ENCODE measurements at regions of chr5 and their contacts with region 1.

Region 1: GRCh38 chr5:143355720-143356119 is 47.8 kb downstream of the NR3C1 start:
- DNase-seq: no peak
- H3K4me3 Mint-ChIP-seq: no peak overlapping the region
- H3K27ac Mint-ChIP-seq: no peak overlapping the region
- H3K4me1 Mint-ChIP-seq: peaks cover 55% of the 10 kb centered on the region
- H3K27me3 Mint-ChIP-seq: no peaks in the 10 kb centered on the region

Region 2: DNA sequence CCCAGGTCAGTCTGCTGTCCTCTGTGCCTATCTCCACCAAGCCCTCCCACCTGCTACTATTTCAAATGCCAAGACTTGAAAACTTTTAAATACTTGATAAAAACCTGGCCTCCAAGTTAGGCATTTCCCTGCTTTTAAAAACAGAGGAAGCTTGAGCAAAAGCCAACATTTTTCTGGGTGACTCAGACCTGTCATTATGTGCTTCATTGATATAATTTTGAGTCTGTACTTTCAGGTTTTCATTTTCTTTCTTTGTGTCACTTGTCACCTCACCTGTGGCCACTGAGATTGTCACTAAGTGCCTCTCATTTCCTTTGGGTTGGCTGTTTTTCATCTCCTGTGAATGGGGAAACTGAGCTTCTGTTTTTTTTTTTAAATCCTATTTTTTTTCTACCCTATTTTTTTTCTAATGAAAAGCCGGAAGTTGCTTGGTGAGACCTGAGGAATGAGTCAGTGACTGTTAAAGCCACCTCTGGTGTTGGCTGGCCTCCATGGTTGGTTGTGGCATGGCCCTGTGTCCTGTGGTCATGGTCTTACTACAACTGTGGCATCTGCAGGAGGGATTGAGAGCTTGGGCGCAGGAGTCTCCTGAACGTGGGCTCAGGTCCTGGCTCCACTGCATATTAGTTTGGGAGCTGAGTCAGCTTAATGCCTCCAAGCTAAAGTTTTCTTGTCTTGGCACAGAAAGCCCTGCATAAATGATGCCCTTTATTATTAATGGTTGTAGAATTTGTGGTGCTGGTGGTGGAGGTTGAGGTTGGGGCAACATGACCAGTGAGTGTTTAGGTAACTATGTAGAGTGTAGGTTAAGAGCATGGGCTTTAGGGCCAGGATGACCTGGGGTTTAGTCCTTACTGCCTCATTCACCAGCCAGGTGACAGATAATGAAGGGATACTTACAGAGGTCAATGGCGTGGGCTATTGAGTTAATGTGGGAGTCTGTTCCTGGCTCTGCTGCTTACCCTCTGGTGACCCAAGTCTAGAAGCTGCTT is 528.7 kb before region 1 on chr5:
- intact Hi-C with region 1: loop called (anchors 2 kb)
- DNase-seq: no peak
- H3K4me3 Mint-ChIP-seq: no peak overlapping the region
- H3K27ac Mint-ChIP-seq: peak overlapping the region; percentile 48
- H3K4me1 Mint-ChIP-seq: peaks cover 72% of the 10 kb centered on the region
- H3K27me3 Mint-ChIP-seq: no peaks in the 10 kb centered on the region

Region 3: DNA sequence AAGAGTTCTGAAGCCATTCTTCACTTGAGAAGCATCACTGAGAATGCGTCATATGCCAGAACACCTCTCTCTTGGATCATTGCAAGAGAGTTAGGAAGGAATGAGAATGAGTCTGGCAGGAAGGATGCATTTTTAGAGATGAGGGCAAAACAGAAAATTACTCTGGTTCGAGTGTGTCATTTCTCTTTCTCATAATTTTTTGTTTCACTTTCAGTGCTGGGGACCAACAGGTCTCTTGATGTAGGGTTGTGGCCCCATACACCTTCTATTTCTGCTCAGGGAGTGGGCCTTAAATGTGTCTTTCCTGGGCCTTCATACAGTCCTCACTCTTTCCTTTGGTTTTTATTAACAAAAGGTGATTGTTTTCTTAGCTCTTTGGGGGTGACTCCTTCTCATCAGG is 254.6 kb before region 1 on chr5:
- intact Hi-C with region 1: loop called (anchors 2 kb)
- DNase-seq: no peak
- H3K4me3 Mint-ChIP-seq: peak overlapping the region; percentile 52
- H3K27ac Mint-ChIP-seq: peak overlapping the region; percentile 95
- H3K4me1 Mint-ChIP-seq: peaks cover 48% of the 10 kb centered on the region
- H3K27me3 Mint-ChIP-seq: no peaks in the 10 kb centered on the region

Region 4: DNA sequence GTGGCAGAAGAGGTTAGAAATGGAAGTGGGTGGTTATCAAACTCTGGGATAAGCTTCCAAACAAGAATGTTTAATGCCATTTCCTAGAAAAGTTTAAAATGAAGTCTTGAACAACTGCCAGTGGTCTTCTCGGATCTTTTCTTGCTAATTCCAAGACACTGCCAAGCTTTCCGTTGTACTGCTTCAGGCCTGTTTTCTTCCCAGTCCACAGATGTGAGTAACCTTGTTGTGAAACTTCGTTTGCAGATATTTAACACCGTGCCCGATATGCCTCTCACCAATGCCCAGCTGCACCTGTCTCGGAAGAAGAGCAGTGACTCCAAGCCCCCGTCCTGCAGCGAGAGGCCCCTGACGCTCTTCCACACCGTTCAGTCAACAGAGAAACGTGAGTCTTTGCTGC is 222.0 kb before region 1 on chr5:
- intact Hi-C with region 1: no loop called
- DNase-seq: no peak
- H3K4me3 Mint-ChIP-seq: no peak overlapping the region
- H3K27ac Mint-ChIP-seq: no peak overlapping the region
- H3K4me1 Mint-ChIP-seq: peaks cover 6% of the 10 kb centered on the region
- H3K27me3 Mint-ChIP-seq: no peaks in the 10 kb centered on the region

Region 5: GRCh38 chr5:143222287-143223231 is 133.2 kb before region 1 on chr5:
- intact Hi-C with region 1: loop called (anchors 2 kb)
- DNase-seq: peak; percentile 74
- H3K4me3 Mint-ChIP-seq: peak overlapping the region; percentile 43
- H3K27ac Mint-ChIP-seq: peak overlapping the region; percentile 97
- H3K4me1 Mint-ChIP-seq: peaks cover 82% of the 10 kb centered on the region
- H3K27me3 Mint-ChIP-seq: no peaks in the 10 kb centered on the region

Region 6: GRCh38 chr5:143372187-143372829 is 16.6 kb after region 1 on chr5:
- intact Hi-C with region 1: no loop called
- DNase-seq: no peak
- H3K4me3 Mint-ChIP-seq: no peak overlapping the region
- H3K27ac Mint-ChIP-seq: no peak overlapping the region
- H3K4me1 Mint-ChIP-seq: peaks cover 15% of the 10 kb centered on the region
- H3K27me3 Mint-ChIP-seq: no peaks in the 10 kb centered on the region

Region 7: DNA sequence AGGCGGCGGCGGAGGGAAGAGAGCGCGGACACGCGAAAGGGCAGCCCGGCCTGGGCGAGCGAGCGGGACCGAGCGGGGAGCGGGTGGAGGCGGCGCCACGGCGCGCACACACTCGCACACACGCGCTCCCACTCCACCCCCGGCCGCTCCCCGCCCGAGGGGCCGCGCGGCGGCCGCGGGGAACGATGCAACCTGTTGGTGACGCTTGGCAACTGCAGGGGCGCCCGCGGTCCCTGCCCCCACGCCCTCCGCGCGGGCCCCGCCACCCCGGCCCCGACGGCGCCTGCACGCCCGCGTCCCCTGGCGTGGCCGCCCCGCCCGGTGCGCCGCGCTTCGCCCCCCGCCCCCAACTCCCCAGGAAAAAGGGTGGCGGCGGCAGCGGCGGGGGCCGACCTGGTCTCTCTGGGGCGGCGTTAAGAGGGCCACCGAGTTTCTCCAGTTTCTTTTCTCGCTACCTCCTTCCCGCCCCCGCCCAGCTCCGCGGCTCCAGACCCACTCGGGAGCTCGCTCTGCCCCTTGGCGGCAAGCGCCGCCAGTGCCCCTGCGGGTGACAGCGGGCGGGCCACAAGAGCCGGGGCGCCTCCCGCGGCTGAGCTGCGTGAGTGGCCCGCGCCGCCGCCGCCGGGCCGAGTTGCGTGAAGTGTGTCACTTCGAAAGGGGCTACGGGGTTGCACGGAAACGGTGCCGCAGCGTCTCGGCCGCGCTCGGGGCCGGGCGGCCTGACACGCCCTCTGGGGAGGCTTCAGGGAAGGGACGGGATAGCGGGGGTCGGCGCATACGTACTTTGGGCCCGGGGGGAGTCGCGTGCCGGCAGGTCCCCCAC is 48.1 kb after region 1 on chr5 and contains the start of gene NR3C1:
- intact Hi-C with region 1: loop called (anchors 5 kb)
- DNase-seq: peak; percentile 81
- H3K4me3 Mint-ChIP-seq: peak within 1 kb of the TSS; percentile 88
- H3K27ac Mint-ChIP-seq: peak within 1 kb of the TSS; percentile 97
- H3K4me1 Mint-ChIP-seq: peaks cover 45% of the 10 kb centered on the region
- H3K27me3 Mint-ChIP-seq: no peaks in the 10 kb centered on the region
- total RNA-seq, gene NR3C1: 51.3 and 52.0 TPM in 2 replicates

Region 8: DNA sequence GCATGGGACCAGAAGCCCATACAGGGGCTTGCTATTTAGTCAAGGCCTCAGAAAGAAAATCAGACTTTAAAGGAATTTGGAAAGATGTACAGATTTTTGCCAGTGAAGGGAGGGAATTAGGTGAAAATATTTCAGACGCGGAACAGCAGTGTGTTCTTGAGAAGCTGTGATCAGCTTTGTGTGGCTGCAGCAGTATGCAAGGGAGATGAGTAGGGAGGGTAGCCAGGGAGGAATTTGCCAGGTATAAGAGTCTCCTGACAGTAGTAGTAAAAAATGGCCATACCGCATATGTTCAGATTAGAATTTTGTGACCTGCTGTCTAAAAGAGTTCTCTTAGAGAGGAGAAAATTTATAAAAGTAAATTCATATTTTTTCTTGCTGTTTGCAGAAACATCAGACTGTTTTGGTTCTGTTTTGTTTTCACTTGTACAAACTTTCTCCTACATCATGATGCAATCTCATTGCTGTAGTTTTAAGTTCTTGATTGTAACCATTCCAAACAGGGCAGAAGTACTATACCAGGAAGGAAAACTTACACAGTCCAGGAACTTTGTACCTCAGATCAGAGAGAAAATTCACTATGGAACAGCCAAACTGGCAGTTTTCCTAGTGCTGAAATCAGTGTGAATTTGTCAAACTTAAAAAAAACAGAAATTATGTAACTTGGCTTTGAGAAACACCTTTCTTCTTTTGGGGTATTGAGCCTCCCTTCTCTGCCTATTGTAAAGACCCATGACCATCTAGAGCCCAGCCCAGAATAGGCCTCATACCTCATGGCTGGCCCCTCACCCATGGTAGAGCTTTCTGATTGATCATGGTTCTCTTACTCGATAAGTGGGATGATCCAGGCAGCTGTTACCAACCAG is 126.2 kb after region 1 on chr5:
- intact Hi-C with region 1: no loop called
- DNase-seq: no peak
- H3K4me3 Mint-ChIP-seq: no peak overlapping the region
- H3K27ac Mint-ChIP-seq: no peak overlapping the region
- H3K4me1 Mint-ChIP-seq: no peaks in the 10 kb centered on the region
- H3K27me3 Mint-ChIP-seq: peaks cover 2% of the 10 kb centered on the region

Region 9: GRCh38 chr5:144191998-144192397 is 836.3 kb after region 1 on chr5:
- intact Hi-C with region 1: loop called (anchors 1 kb)
- DNase-seq: peak; percentile 40
- H3K4me3 Mint-ChIP-seq: no peak overlapping the region
- H3K27ac Mint-ChIP-seq: no peak overlapping the region
- H3K4me1 Mint-ChIP-seq: peaks cover 27% of the 10 kb centered on the region
- H3K27me3 Mint-ChIP-seq: peaks cover 7% of the 10 kb centered on the region

Measured in activated T-helper 2 cell treated with anti-CD3 and anti-CD28 coated beads, Interferon-gamma antibody, Interleukin-2, Interleukin-4, amounts not matched to agents 10 μg/mL and 5 μg/mL and 100 μg/mL, durations not matched to agents 14 hours and 24 hours and 36 hours (primary cell).